GM10248 (cell line): ENCODE measurements at regions of chr1 and their contacts with region 1.

Region 1: DNA sequence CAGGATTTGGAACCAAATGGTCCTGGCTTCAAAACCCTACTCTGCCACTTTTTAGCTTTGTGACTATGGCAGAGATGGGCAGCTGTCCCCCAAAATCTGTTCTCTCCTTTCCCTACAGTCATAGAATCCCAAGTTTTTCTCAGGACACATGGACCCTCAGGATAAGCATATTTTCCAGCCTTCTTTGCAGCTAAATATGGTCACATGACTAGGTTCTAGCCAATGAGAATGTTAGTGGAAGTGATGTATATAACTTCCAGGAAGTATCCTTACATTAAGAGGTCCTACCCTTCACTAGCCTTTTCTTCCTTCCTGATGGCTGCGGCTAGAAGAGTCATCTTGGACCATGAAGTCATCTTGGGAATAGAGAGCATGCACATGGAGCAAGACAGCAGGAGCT is 5.9 kb downstream of the IGSF3 start:
- DNase-seq: no peak
- CTCF ChIP-seq: no peak

Region 2: GRCh38 chr1:116521186-116521585 is 140.4 kb before region 1 on chr1:
- CTCF ChIA-PET with region 1: no interaction called
- POLR2A ChIA-PET with region 1: no interaction called
- DNase-seq: no peak
- CTCF ChIP-seq: no peak

Region 3: GRCh38 chr1:116674011-116674531 is 12.4 kb after region 1 on chr1:
- CTCF ChIA-PET with region 1: interaction called, 25 read pairs
- POLR2A ChIA-PET with region 1: no interaction called
- DNase-seq: no peak
- CTCF ChIP-seq: no peak